Kidney (tissue), 22 donors: ENCODE measurements at regions of chr5 and their contacts with region 1.

Region 1: DNA sequence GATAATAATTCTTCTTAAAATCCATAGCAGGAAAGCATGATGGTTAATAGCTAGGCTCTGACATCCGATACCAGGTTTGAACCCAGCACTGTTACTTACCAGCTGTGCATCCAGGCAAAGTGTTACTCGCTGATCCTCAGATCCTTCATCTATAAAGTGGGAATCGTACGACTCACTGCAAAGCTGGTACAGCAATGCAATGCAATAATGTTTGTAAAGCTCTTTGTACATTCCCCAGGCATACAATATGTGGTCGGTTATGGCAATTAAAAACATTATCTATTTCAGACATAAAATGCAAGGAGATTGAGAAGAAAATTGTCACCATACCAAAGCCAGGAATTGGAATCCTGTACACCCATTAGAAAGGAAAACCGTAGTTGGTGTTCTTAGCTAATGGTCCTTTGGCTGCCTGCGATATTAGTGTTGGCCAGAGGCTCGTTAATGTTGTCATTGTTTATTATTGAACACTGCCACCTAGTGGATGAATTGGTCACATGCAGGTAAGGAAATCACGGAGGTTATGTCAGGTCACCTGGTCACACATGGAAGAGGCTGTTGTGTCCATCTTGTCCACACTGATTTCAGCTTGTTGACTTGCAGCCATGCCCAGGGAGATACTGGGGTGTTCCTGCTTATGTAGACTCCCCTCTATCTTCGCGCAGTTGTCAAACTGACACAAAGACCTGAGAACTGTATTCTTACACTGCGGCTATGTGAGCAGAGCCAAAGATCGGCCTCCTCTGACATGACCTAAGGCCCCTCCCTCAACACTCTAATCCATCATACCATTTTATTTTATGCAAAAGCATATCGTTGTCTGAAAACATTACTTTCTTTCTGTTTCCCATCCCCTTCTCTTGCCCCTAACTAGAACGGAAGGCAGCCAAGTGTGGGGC is 87.5 kb upstream of the PPP2R2B start:
- DNase-seq: peak in 4 of 5 donors; percentile 61 to 86 (median 78)
- H3K4me3 ChIP-seq: no peak overlapping the region
- H3K27ac ChIP-seq: no peak overlapping the region
- H3K4me1 ChIP-seq: peaks cover 0 to 6% (median 0%) of the 10 kb centered on the region in 3 donors
- H3K27me3 ChIP-seq: no peaks in the 10 kb centered on the region
- CTCF ChIP-seq: peak; percentile 84

Region 2: GRCh38 chr5:146541958-146542849 is 423.8 kb before region 1 on chr5:
- intact Hi-C with region 1: loop called (anchors 10 kb)
- DNase-seq: peak in 4 of 5 donors; percentile 73 to 80 (median 77)
- H3K4me3 ChIP-seq: no peak overlapping the region
- H3K27ac ChIP-seq: no peak overlapping the region
- H3K4me1 ChIP-seq: no peaks in the 10 kb centered on the region
- H3K27me3 ChIP-seq: no peaks in the 10 kb centered on the region
- CTCF ChIP-seq: peak; percentile 77

Region 3: DNA sequence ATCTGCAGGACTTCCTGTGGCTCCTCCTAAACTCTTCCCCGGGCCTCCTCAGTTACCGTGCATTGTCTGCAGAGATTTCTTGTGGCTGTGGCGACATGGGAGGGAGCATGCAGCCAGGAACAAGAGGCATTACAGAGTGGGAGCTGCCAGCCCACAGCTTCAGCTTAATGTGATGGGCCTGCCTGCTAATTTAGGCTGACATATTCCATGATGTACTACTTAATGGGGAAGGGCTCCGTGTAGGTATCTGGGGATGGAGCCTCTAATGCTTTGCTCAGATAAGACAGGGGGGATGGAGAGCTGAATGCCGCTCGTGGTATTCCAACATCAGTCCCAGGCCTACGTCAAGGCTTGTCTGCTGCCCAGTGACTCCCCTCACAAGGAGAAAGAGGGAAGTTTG is 312.4 kb before region 1 on chr5:
- intact Hi-C with region 1: loop called (anchors 10 kb)
- DNase-seq: no peak
- H3K4me3 ChIP-seq: no peak overlapping the region
- H3K27ac ChIP-seq: no peak overlapping the region
- H3K4me1 ChIP-seq: no peaks in the 10 kb centered on the region
- H3K27me3 ChIP-seq: no peaks in the 10 kb centered on the region
- CTCF ChIP-seq: no peak

Region 4: DNA sequence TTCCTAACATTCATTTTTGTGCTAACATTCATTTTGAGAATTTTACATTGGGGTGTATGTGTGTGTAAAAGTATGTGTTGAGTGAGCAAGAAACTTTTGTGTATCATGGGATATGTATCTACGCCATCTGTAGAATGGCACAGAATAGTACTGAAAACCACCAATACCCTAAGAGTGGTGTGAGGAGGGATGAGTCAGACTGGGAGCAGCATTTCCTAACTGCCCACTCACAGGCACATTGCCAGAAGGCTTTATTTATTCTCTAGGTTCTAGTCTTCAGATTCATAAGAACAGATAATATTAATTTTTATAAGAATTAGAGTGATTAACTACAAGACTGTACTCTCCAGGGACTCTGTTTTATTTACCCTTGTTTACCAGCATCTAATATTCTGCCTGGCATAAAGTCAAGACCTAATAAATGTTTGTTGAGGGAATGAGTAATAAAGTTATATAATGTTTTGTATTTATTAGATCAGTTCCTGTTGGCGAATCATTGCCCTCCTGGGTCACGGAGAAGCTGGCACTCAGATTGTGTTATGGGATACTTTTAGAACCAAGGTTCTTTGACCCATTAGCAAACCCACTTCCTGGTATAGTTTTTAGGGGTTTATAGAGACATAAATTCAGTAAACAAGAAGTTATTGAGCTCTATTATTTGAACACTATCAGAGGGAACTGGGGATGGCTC is 71.7 kb after region 1 on chr5:
- intact Hi-C with region 1: no loop called
- DNase-seq: no peak
- H3K4me3 ChIP-seq: no peak overlapping the region
- H3K27ac ChIP-seq: no peak overlapping the region
- H3K4me1 ChIP-seq: no peaks in the 10 kb centered on the region
- H3K27me3 ChIP-seq: no peaks in the 10 kb centered on the region
- CTCF ChIP-seq: no peak

Region 5: GRCh38 chr5:148659641-148660345 is 1693.8 kb after region 1 on chr5:
- intact Hi-C with region 1: no loop called
- DNase-seq: no peak
- H3K4me3 ChIP-seq: no peak overlapping the region
- H3K27ac ChIP-seq: no peak overlapping the region
- H3K4me1 ChIP-seq: no peaks in the 10 kb centered on the region
- H3K27me3 ChIP-seq: no peaks in the 10 kb centered on the region
- CTCF ChIP-seq: no peak